Activated naive CD4-positive, alpha-beta T cell treated with anti-CD3 and anti-CD28 coated beads, Interleukin-2, amount 10 ng/mL, durations not matched to agents 7 days and 5 days (primary cell): ENCODE measurements at regions of chr2 and their contacts with region 1.

Region 1: DNA sequence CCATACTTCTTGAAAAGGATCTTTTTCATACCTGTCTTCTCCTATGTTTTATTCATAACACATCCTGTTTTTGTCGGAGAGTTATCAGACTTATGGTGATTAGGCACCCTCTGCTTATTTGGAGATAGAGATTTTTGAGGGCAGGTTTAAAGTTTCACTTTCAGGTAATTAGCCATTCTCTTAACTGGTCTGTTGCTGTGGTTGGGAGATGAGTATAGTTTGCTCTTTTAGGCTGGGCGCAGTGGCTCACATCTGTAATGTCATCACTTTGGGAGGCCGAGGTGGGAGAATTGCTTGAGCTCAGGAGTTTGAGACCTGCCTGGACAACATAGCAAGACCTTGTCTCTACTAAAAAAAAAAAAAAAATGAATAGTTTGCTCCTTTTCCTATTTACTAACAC is 25.3 kb downstream of the SFTPB start:
- DNase-seq: no peak
- H3K4me3 Mint-ChIP-seq: no peak overlapping the region
- H3K27ac Mint-ChIP-seq: peak overlapping the region; percentile 60
- H3K4me1 Mint-ChIP-seq: peaks cover 18% of the 10 kb centered on the region
- H3K27me3 Mint-ChIP-seq: no peaks in the 10 kb centered on the region

Region 2: GRCh38 chr2:85420536-85421259 is 222.0 kb before region 1 on chr2:
- CTCF ChIA-PET with region 1: interaction called, 12 read pairs
- DNase-seq: peak; percentile 94
- H3K4me3 Mint-ChIP-seq: peak overlapping the region; percentile 57
- H3K27ac Mint-ChIP-seq: peak overlapping the region; percentile 80
- H3K4me1 Mint-ChIP-seq: peaks cover 35% of the 10 kb centered on the region
- H3K27me3 Mint-ChIP-seq: peaks cover 12% of the 10 kb centered on the region

Region 3: GRCh38 chr2:85619617-85620016 is 23.1 kb before region 1 on chr2:
- CTCF ChIA-PET with region 1: interaction called, 14 read pairs
- DNase-seq: no peak
- H3K4me3 Mint-ChIP-seq: no peak overlapping the region
- H3K27ac Mint-ChIP-seq: no peak overlapping the region
- H3K4me1 Mint-ChIP-seq: peaks cover 30% of the 10 kb centered on the region
- H3K27me3 Mint-ChIP-seq: no peaks in the 10 kb centered on the region

Region 4: GRCh38 chr2:85628658-85629057 is 14.1 kb before region 1 on chr2:
- CTCF ChIA-PET with region 1: interaction called, 15 read pairs
- DNase-seq: no peak
- H3K4me3 Mint-ChIP-seq: no peak overlapping the region
- H3K27ac Mint-ChIP-seq: peak overlapping the region; percentile 58
- H3K4me1 Mint-ChIP-seq: peaks cover 12% of the 10 kb centered on the region
- H3K27me3 Mint-ChIP-seq: no peaks in the 10 kb centered on the region

Region 5: GRCh38 chr2:85707304-85707703 is 64.6 kb after region 1 on chr2:
- CTCF ChIA-PET with region 1: interaction called, 34 read pairs
- DNase-seq: peak; percentile 74
- H3K4me3 Mint-ChIP-seq: no peak overlapping the region
- H3K27ac Mint-ChIP-seq: peak overlapping the region; percentile 39
- H3K4me1 Mint-ChIP-seq: peaks cover 46% of the 10 kb centered on the region
- H3K27me3 Mint-ChIP-seq: peaks cover 41% of the 10 kb centered on the region

Region 6: GRCh38 chr2:85728883-85729824 is 86.4 kb after region 1 on chr2:
- CTCF ChIA-PET with region 1: interaction called, 12 read pairs
- DNase-seq: peak; percentile 82
- H3K4me3 Mint-ChIP-seq: no peak overlapping the region
- H3K27ac Mint-ChIP-seq: no peak overlapping the region
- H3K4me1 Mint-ChIP-seq: peaks cover 3% of the 10 kb centered on the region
- H3K27me3 Mint-ChIP-seq: peaks cover 66% of the 10 kb centered on the region

Region 7: GRCh38 chr2:85750587-85751575 is 108.2 kb after region 1 on chr2:
- CTCF ChIA-PET with region 1: interaction called, 10 read pairs
- DNase-seq: peak; percentile 78
- H3K4me3 Mint-ChIP-seq: no peak overlapping the region
- H3K27ac Mint-ChIP-seq: no peak overlapping the region
- H3K4me1 Mint-ChIP-seq: peaks cover 17% of the 10 kb centered on the region
- H3K27me3 Mint-ChIP-seq: peaks cover 100% of the 10 kb centered on the region